ENCODE measurements at regions of chr4 and their contacts with region 1.

Region 1: GRCh38 chr4:112231779-112232713 is at the start of gene AP1AR:
- DNase-seq: peak; percentile 64
- ATAC-seq: peak; percentile 79
- H3K4me3 ChIP-seq: peak within 1 kb of the TSS; percentile 80
- H3K27ac ChIP-seq: peak within 1 kb of the TSS; percentile 94
- H3K4me1 ChIP-seq: no peaks in the 10 kb centered on the region
- H3K27me3 ChIP-seq: no peaks in the 10 kb centered on the region
- CTCF ChIP-seq: peak; percentile 44
- POLR2A ChIP-seq: peak; percentile 81; the same call in 1 of the 2 replicates
- RAD21 ChIP-seq: peak; percentile 20; the same call in 1 of the 2 replicates
- total RNA-seq, gene AP1AR: 4.7 and 8.3 TPM in 2 replicates

Region 2: GRCh38 chr4:112145326-112145819 is 86.7 kb before region 1 on chr4 and contains the start of gene FAM241A:
- CTCF ChIA-PET with region 1: no interaction called
- POLR2A ChIA-PET with region 1: no interaction called
- dilution Hi-C with region 1: no loop called
- in situ Hi-C with region 1: no loop called
- intact Hi-C with region 1: loop called (anchors 2 kb)
- DNase-seq: peak; percentile 64
- ATAC-seq: peak; percentile 100
- H3K4me3 ChIP-seq: peak within 1 kb of the TSS; percentile 65
- H3K27ac ChIP-seq: no peak within 1 kb of the TSS; the same call in 1 of the 2 replicates
- H3K4me1 ChIP-seq: no peaks in the 10 kb centered on the region
- H3K27me3 ChIP-seq: no peaks in the 10 kb centered on the region; the same call in 1 of the 2 replicates
- CTCF ChIP-seq: no peak
- POLR2A ChIP-seq: 0 out of 2 replicates have a peak, but pooled peaks have one; percentile 38
- RAD21 ChIP-seq: no peak
- total RNA-seq, gene FAM241A: under 0.01 and 0.28 TPM in 2 replicates

Region 3: GRCh38 chr4:112214390-112215264 is 17.4 kb before region 1 on chr4:
- CTCF ChIA-PET with region 1: interaction called, 6 read pairs
- POLR2A ChIA-PET with region 1: no interaction called
- dilution Hi-C with region 1: no loop called
- in situ Hi-C with region 1: no loop called
- intact Hi-C with region 1: loop called (anchors 1 kb)
- DNase-seq: peak; percentile 27
- ATAC-seq: peak; percentile 27; the same call in 1 of the 2 replicates
- H3K4me3 ChIP-seq: no peak overlapping the region
- H3K27ac ChIP-seq: peak overlapping the region; percentile 49; the same call in 1 of the 2 replicates
- H3K4me1 ChIP-seq: peaks cover 3% of the 10 kb centered on the region
- H3K27me3 ChIP-seq: no peaks in the 10 kb centered on the region
- CTCF ChIP-seq: peak; percentile 32; the same call in 1 of the 2 replicates
- POLR2A ChIP-seq: no peak
- RAD21 ChIP-seq: peak; percentile 32; the same call in 1 of the 2 replicates

Region 4: GRCh38 chr4:112284662-112285411 is 52.8 kb after region 1 on chr4:
- CTCF ChIA-PET with region 1: no interaction called
- POLR2A ChIA-PET with region 1: no interaction called
- dilution Hi-C with region 1: no loop called
- in situ Hi-C with region 1: no loop called
- intact Hi-C with region 1: loop called (anchors 5 kb)
- DNase-seq: peak; percentile 24
- ATAC-seq: peak; percentile 25
- H3K4me3 ChIP-seq: peak overlapping the region; percentile 93
- H3K27ac ChIP-seq: peak overlapping the region; percentile 30
- H3K4me1 ChIP-seq: 0 out of 2 replicates have a peak, but pooled peaks cover 3% of the 10 kb centered on the region
- H3K27me3 ChIP-seq: no peaks in the 10 kb centered on the region
- CTCF ChIP-seq: no peak
- POLR2A ChIP-seq: no peak
- RAD21 ChIP-seq: no peak

Region 5: GRCh38 chr4:112472318-112472717 is 240.3 kb after region 1 on chr4:
- CTCF ChIA-PET with region 1: no interaction called
- POLR2A ChIA-PET with region 1: no interaction called
- dilution Hi-C with region 1: no loop called
- in situ Hi-C with region 1: no loop called
- intact Hi-C with region 1: no loop called
- DNase-seq: no peak
- ATAC-seq: no peak
- H3K4me3 ChIP-seq: no peak overlapping the region
- H3K27ac ChIP-seq: no peak overlapping the region
- H3K4me1 ChIP-seq: no peaks in the 10 kb centered on the region
- H3K27me3 ChIP-seq: no peaks in the 10 kb centered on the region
- CTCF ChIP-seq: no peak
- POLR2A ChIP-seq: no peak
- RAD21 ChIP-seq: no peak

Region 6: DNA sequence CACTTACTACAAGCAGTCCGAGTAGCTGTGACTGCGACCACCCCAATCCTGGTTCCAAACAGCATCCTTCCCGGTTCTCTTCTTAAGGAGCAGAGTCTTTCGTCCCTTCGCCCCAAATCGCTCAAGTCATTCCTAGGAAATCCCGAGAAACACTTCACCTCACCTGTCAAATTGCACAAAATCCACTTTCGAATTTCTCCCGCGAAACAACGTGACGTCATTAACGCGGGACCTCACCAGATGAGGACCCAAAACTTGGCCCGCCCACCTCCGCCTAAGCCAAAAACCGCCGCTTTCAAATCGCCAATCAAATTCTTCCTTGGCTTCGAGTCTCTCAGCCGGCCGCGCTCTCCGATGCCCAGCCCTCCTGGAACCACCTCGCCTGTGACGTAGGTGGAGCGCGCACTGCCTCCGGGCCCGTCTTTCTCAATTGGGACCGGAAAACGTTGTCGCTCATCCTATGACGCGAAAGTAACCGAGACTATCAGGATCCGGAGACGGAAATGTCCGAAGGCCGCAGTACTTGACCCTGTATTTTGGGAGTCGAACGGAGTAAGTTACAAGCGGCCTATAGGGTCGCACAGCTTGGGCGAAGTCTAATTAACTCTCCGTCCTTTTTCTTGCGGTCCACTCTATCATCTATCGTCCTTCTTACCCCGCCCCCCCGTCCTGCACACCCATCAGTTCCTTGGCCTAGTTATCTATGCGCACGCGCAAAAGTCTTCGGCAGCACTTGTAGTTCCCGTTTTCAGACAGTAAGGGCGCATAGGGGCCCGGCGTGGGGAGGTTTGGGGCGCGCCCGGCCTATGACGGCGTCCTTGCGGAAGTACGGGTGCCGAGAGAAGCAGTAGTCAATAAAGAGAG is 404.9 kb after region 1 on chr4 and contains the starts of genes LARP7 and ZGRF1:
- CTCF ChIA-PET with region 1: no interaction called
- POLR2A ChIA-PET with region 1: no interaction called
- dilution Hi-C with region 1: no loop called
- in situ Hi-C with region 1: no loop called
- intact Hi-C with region 1: loop called (anchors 10 kb)
- DNase-seq: peak; percentile 99
- ATAC-seq: peak; percentile 95
- H3K4me3 ChIP-seq: peak within 1 kb of the TSS; percentile 73
- H3K27ac ChIP-seq: peak within 1 kb of the TSS; percentile 94
- H3K4me1 ChIP-seq: 0 out of 2 replicates have a peak, but pooled peaks cover 2% of the 10 kb centered on the region
- H3K27me3 ChIP-seq: no peaks in the 10 kb centered on the region
- CTCF ChIP-seq: peak; percentile 96
- POLR2A ChIP-seq: peak; percentile 79; the same call in 1 of the 2 replicates
- RAD21 ChIP-seq: 0 out of 2 replicates have a peak, but pooled peaks have one; percentile 20
- total RNA-seq, gene LARP7: 5.9 and 16.7 TPM in 2 replicates
- total RNA-seq, gene ZGRF1: 5.6 and 10.0 TPM in 2 replicates

Region 7: DNA sequence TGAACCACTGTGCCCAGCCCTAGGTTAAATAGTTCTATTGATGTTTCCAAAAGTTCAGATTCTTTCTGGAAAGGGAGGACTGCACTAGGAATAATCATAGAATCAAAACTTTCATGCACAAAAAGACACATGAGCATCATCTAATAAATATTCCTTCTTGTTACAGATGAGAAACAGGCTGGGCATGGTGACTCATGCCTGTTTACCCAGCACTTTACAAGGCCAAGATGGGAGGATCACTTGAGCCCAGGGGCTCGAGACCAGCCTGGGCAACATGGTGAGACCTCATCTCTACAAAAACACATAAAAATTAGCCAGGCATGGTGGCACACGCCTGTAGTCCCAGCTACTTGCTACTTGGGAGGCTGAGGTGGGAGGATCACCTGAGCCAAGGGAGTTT is 432.6 kb after region 1 on chr4:
- CTCF ChIA-PET with region 1: no interaction called
- POLR2A ChIA-PET with region 1: no interaction called
- dilution Hi-C with region 1: no loop called
- in situ Hi-C with region 1: no loop called
- intact Hi-C with region 1: no loop called
- DNase-seq: peak; percentile 6
- ATAC-seq: no peak
- H3K4me3 ChIP-seq: no peak overlapping the region
- H3K27ac ChIP-seq: no peak overlapping the region
- H3K4me1 ChIP-seq: no peaks in the 10 kb centered on the region
- H3K27me3 ChIP-seq: no peaks in the 10 kb centered on the region
- CTCF ChIP-seq: no peak
- POLR2A ChIP-seq: no peak
- RAD21 ChIP-seq: no peak

Measured in IMR-90 (cell line).